Left cardiac atrium (tissue), 4 donors: ENCODE measurements at regions of chr1 and their contacts with region 1.

Region 1: DNA sequence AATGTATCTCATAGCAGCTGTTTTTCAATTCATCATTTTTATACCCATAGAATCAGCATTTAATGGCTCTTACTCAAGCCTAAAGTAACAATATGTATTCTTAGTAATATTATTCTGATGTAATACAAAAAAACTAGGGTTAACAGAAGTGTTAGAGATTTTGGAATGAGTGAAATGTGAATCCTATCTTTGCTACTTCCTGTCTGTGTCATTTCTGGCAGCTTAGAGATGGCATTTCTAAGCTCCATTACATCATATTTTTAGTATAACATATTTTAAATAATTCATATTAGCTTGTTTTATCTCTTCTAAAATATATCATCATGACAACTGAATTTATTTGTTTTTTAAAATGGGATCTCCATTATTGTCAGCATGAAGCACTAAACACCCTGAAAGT is 90.2 kb downstream of the LRRC7 start:
- DNase-seq: no peak
- ATAC-seq: no peak

Region 2: GRCh38 chr1:68358439-68358838 is 1299.5 kb before region 1 on chr1:
- intact Hi-C with region 1: loop called in 1 of 2 experiments (anchors 10 kb)
- DNase-seq: no peak
- ATAC-seq: peak; percentile 41 to 70

Region 3: GRCh38 chr1:69752831-69753230 is 94.9 kb after region 1 on chr1:
- intact Hi-C with region 1: no loop called
- DNase-seq: no peak
- ATAC-seq: no peak